Sigmoid colon (tissue), 7 donors: ENCODE measurements at regions of chr9 and their contacts with region 1.

Region 1: GRCh38 chr9:136093995-136094881 is 851 bp downstream of the NACC2 start:
- DNase-seq: peak; percentile 96
- H3K4me3 ChIP-seq: peak overlapping the region; percentile 75 to 95 (median 90)
- H3K27ac ChIP-seq: peak overlapping the region; percentile 97 to 98 (median 98)
- H3K4me1 ChIP-seq: peaks cover 0 to 68% (median 65%) of the 10 kb centered on the region in 4 donors
- H3K27me3 ChIP-seq: no peaks in the 10 kb centered on the region
- CTCF ChIP-seq: peak in 2 of 4 experiments; percentile 10 to 34
- EP300 ChIP-seq: no peak
- POLR2A ChIP-seq: peak; percentile 11 to 79

Region 2: DNA sequence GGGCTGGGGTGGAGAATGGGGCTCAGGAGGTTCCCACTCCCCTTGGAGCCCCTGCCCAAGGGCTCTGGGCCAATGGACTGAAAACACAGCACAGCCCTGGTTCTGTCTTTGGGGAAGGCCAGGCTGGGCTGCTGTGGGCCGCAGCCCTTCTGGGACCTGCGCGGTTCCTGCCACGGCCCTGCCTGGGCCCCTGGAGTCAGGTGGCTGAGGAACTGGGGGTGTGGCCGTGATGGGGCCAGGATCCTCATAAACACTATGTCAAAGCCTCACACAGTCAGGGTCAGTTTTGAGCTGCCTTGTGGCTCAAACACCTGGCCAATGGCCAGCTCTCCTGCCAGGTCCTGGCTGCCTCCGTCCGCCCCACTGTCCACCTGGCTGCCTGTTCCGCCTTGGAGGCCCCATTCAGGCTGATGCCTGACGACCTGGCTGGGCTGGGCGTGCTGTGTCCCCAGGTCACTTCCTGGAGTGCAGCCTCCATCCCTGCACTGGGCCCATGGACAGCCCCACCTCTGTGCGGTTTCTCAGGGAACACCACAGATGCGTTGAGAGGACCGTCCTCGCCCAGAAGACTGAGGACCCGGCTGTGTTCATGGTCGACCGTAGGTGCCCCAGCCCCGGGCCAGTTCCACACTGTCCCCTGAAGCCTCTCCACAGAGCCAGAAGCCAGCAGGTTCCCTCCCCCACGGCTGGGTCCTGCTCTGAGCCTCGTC is 505.2 kb before region 1 on chr9:
- intact Hi-C with region 1: no loop called
- DNase-seq: peak; percentile 55
- H3K4me3 ChIP-seq: no peak overlapping the region
- H3K27ac ChIP-seq: no peak overlapping the region
- H3K4me1 ChIP-seq: no peaks in the 10 kb centered on the region
- H3K27me3 ChIP-seq: peaks cover 0 to 11% (median 9%) of the 10 kb centered on the region in 3 donors
- CTCF ChIP-seq: no peak
- EP300 ChIP-seq: no peak
- POLR2A ChIP-seq: no peak

Region 3: DNA sequence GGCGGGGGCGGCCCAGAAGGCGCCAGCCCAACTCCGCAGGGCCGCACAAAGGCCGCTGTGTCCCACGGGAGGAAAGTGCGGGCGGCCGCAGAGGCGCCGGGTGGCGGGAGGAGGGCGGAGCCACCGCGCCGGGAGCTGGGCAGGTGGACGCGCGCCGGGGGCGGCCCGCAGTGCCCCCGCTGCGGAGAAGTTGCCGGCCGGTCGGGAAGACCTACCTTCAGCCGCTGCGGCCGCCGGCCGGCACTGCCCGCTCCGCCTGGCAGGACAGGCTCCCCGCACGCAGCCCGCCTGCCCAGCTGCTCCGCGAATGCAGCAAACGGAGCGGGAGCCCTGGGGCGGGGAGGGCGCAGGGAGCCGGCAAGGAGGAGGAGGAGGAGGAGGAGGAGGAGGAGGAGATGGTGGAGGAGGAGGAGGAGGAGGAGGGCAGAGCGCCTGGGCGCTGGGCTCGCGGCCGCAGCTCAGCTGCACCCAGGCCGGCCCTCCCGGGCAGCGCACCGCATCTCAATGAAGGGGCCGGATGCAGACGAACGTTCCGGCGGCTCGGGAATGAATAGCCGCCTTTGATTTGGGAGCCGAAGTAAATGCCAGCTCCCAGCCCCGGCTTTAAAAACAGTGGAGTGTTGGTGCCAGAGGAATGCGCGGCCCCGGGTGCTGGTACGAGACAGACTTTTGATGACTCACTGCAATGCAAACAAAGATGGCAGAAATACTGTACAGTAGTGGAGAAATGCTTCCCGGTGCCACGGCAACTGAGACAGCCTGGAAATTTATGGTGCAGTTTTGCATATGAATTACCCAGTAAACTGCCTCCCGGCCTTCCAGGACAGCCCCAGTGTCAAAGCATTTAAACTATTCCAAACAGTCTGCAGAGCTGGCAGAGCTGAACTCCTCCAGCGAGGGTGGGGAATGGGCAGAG is 42.5 kb before region 1 on chr9:
- intact Hi-C with region 1: loop called (anchors 5 kb)
- DNase-seq: peak; percentile 89
- H3K4me3 ChIP-seq: peak overlapping the region; percentile 35 to 57 (median 54)
- H3K27ac ChIP-seq: peak overlapping the region; percentile 83 to 90 (median 88)
- H3K4me1 ChIP-seq: peaks cover 0 to 98% (median 93%) of the 10 kb centered on the region in 4 donors
- H3K27me3 ChIP-seq: no peaks in the 10 kb centered on the region
- CTCF ChIP-seq: no peak
- EP300 ChIP-seq: peak in 2 of 4 donors; percentile 6 to 43
- POLR2A ChIP-seq: no peak

Region 4: DNA sequence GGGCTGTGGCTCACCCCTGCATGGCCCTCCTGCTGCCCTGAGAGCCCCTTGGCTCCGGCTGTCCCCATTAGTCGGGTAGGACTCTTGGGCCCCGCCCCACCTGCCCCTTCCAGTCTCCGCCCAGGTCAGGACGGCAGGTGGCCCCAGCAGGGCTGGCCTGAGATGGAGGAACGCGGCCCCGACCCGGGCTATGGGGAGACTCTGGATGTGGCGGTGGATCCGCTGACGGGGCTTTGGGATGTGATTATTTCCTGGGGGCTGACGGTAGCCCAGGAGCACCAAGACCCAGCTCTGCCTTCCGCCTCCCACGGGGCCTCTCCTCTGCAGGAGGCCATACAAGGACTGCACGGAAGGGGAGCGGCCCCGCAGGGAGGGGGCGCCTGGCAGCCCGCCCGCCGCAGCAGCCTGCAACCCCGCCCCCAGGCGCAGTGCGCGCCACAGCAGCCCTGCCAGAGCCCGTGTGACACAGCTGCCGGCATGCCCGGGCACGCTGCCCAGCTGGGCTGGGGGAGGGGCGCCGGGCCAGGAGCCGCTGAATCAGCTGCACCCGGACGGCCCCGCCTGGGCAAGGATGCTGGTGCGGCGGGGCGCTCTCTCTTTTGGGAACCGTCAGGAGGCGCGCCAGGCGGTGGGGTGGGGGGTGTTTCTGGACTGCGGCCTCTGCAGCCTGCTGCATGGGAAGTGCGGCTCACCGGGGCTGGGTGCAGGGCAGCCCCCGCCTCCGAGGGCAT is 15.3 kb after region 1 on chr9:
- intact Hi-C with region 1: loop called (anchors 2 kb)
- DNase-seq: peak; percentile 97
- H3K4me3 ChIP-seq: peak overlapping the region; percentile 1 to 47 (median 40)
- H3K27ac ChIP-seq: peak overlapping the region; percentile 85 to 91 (median 86)
- H3K4me1 ChIP-seq: peaks cover 0 to 50% (median 43%) of the 10 kb centered on the region in 4 donors
- H3K27me3 ChIP-seq: no peaks in the 10 kb centered on the region
- CTCF ChIP-seq: peak in 1 of 4 experiments; percentile 6
- EP300 ChIP-seq: peak in 2 of 4 donors; percentile 64 to 80
- POLR2A ChIP-seq: no peak

Region 5: DNA sequence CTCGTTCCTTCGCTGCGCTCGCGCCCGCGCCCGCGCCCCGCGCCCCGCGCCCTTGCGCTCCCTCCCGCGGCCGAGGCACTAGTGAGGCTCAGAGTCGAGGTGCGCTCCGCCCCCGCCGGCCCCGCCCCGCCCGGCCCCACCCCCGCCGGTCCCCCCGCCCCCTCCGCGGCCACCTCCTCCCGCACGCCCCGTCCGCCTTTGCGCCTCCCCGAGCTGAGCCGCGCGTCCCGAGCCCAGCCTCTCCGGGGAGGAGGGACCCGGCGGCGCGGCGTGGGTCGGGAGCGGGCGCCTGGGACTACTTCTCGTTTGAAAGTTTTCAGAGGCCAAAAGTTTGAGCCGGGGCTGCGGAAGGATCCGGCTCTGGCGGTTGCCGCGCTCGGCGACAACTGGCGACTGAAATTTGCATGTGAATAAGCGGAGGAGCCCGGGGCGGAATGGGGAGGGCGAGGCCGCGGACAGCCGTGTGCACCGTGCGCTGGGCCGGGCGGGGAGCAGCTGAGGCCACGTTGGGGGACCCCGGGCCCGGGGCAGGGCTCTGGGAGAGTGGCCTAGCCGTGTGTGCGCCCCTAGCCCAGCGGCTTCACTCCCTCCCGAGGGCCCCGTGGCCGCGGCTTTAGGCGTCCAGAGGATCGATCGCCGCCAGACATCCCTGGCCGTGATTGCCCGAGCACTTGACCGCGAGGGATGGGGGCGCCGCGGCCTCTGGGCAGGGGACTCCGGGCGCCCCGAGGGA is 451.9 kb after region 1 on chr9 and contains the start of gene NOTCH1:
- intact Hi-C with region 1: loop called (anchors 5 kb)
- DNase-seq: peak; percentile 98
- H3K4me3 ChIP-seq: peak within 1 kb of the TSS; percentile 82 to 98 (median 90)
- H3K27ac ChIP-seq: peak within 1 kb of the TSS; percentile 97 to 100 (median 100)
- H3K4me1 ChIP-seq: peaks cover 0 to 86% (median 78%) of the 10 kb centered on the region in 4 donors
- H3K27me3 ChIP-seq: no peaks in the 10 kb centered on the region
- CTCF ChIP-seq: no peak
- EP300 ChIP-seq: peak in 1 of 4 donors; percentile 57
- POLR2A ChIP-seq: peak; percentile 86 to 94
- total RNA-seq, gene NOTCH1: 16.6 to 36.0 (median 31.8) TPM